ENCODE measurements at regions of chr13 and their contacts with region 1.

Region 1: DNA sequence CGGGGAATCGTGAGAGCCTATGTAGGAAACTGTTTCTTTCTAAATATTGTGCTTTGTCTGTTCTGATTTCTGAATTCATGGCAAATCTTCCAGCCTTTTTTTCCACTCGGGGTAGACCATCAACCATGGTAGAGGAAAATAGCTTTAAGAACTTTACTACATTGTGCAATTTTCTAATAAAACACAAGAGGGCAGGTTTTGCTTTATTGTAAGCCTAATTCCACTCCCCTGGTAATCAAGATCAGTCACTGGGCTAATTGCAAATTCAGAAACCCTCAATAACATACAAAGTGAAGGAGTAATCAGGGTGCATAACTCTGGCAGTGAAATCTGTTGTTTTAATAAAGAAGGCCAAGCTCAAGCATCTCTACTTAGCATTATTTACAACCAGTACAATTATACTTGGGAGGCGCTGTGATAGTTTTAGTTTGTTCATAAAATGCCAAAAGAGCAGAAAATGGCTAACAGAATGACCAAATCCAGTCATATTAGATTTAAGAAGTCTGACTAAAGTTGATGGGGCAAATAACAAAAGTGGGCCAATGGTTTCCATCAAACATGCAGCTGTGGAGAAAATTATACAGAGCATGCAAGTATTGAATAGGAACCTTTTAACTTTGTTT is 43.8 kb downstream of the DCT start:
- DNase-seq: peak; percentile 53
- H3K4me3 ChIP-seq: no peak overlapping the region
- H3K27ac ChIP-seq: no peak overlapping the region
- H3K4me1 ChIP-seq: no peaks in the 10 kb centered on the region
- CTCF ChIP-seq: peak; percentile 75

Region 2: GRCh38 chr13:94617389-94618000 is 181.8 kb after region 1 on chr13:
- CTCF ChIA-PET with region 1: interaction called, 4 read pairs
- POLR2A ChIA-PET with region 1: interaction called, 3 read pairs
- intact Hi-C with region 1: loop called (anchors 1 kb)
- DNase-seq: peak; percentile 34
- H3K4me3 ChIP-seq: no peak overlapping the region
- H3K27ac ChIP-seq: no peak overlapping the region
- H3K4me1 ChIP-seq: no peaks in the 10 kb centered on the region
- CTCF ChIP-seq: peak; percentile 79